ENCODE measurements at regions of chr2 and their contacts with region 1.

Region 1: GRCh38 chr2:37877457-37878315 is 47.4 kb upstream of the RMDN2 start:
- DNase-seq: peak in 1 of 2 donors; percentile 65
- ATAC-seq: peak in 7 of 8 donors; percentile 39 to 77 (median 51)
- H3K4me3 ChIP-seq: no peak overlapping the region
- H3K27ac ChIP-seq: peak overlapping the region in 1 of 10 donors; percentile 29
- H3K4me1 ChIP-seq: peaks cover 4 to 46% (median 41%) of the 10 kb centered on the region in 9 donors
- H3K27me3 ChIP-seq: peaks cover 0 to 15% (median 0%) of the 10 kb centered on the region in 7 donors
- CTCF ChIP-seq: peak; percentile 71 to 88 (median 79)

Region 2: DNA sequence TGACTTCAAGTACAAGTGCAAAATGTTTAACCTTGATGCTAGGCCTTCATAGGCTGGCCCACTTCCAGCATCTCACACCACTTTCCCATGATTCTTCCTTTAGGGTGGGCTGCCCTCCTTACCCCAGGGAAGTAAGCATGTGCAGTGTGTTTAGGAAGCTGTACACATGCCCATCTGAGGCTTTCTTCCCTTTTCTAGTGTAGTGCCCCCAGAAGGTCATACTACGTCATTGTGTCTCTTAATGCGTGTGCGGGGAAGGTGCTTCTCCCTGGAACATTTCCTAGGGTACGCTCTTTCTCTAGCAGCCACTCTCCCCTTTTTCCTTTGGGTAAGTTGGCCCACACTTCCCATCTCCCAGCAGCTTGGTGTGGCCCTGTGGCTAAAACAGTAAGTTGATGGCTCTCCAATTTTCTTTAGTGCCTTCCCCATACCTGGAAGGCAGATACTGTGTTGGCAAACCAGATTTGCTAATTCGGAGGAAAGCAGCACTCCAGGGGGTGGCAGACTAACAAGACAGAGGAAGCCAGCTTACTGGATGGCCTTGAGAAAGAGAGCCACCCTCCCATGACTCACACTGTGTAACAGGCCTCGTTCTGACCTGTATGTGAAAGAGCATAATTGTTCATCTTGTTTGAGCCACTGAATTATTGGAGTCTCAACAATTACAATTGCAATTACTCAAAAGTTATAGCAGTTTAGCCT is 688.1 kb before region 1 on chr2:
- intact Hi-C with region 1: loop called in 1 of 10 experiments (anchors 10 kb)
- DNase-seq: no peak
- ATAC-seq: peak in 3 of 8 donors; percentile 42 to 47 (median 43)
- H3K4me3 ChIP-seq: no peak overlapping the region
- H3K27ac ChIP-seq: peak overlapping the region in 1 of 10 donors; percentile 47
- H3K4me1 ChIP-seq: peaks cover 0 to 13% (median 0%) of the 10 kb centered on the region in 9 donors
- H3K27me3 ChIP-seq: peaks cover 0 to 3% (median 0%) of the 10 kb centered on the region in 7 donors
- CTCF ChIP-seq: no peak

Region 3: GRCh38 chr2:37397166-37397565 is 480.5 kb before region 1 on chr2:
- intact Hi-C with region 1: loop called (anchors 2 to 5 kb)
- DNase-seq: no peak
- ATAC-seq: no peak
- H3K4me3 ChIP-seq: no peak overlapping the region
- H3K27ac ChIP-seq: no peak overlapping the region
- H3K4me1 ChIP-seq: peaks cover 0 to 6% (median 0%) of the 10 kb centered on the region in 9 donors
- H3K27me3 ChIP-seq: no peaks in the 10 kb centered on the region
- CTCF ChIP-seq: no peak

Region 4: GRCh38 chr2:37672104-37672869 is 205.4 kb before region 1 on chr2:
- intact Hi-C with region 1: loop called in 5 of 10 experiments (anchors 5 to 10 kb)
- DNase-seq: peak; percentile 79 to 83
- ATAC-seq: peak; percentile 72 to 87 (median 76)
- H3K4me3 ChIP-seq: peak overlapping the region; percentile 78 to 99 (median 95)
- H3K27ac ChIP-seq: peak overlapping the region; percentile 91 to 100 (median 99)
- H3K4me1 ChIP-seq: peaks cover 3 to 61% (median 30%) of the 10 kb centered on the region in 9 donors
- H3K27me3 ChIP-seq: no peaks in the 10 kb centered on the region
- CTCF ChIP-seq: peak in 2 of 9 donors; percentile 8 to 12

Region 5: GRCh38 chr2:38145236-38145635 is 267.6 kb after region 1 on chr2:
- intact Hi-C with region 1: no loop called
- DNase-seq: no peak
- ATAC-seq: no peak
- H3K4me3 ChIP-seq: no peak overlapping the region
- H3K27ac ChIP-seq: peak overlapping the region in 6 of 10 donors; percentile 76 to 91 (median 80)
- H3K4me1 ChIP-seq: peaks cover 0 to 56% (median 12%) of the 10 kb centered on the region in 9 donors
- H3K27me3 ChIP-seq: no peaks in the 10 kb centered on the region
- CTCF ChIP-seq: no peak